ENCODE measurements at regions of chr6 and their contacts with region 1.

Region 1: GRCh38 chr6:80106418-80107235 is at the start of gene BCKDHB:
- DNase-seq: peak; percentile 99
- H3K4me3 ChIP-seq: peak within 1 kb of the TSS; percentile 71 to 89 (median 84)
- H3K27ac ChIP-seq: peak within 1 kb of the TSS; percentile 89 to 97 (median 94)
- H3K4me1 ChIP-seq: peaks cover 6 to 17% (median 13%) of the 10 kb centered on the region in 4 donors
- H3K27me3 ChIP-seq: no peaks in the 10 kb centered on the region
- CTCF ChIP-seq: peak in 1 of 3 experiments; percentile 20
- EP300 ChIP-seq: no peak
- POLR2A ChIP-seq: peak; percentile 61
- total RNA-seq, gene BCKDHB: 12.2 to 26.2 (median 20.6) TPM

Region 2: DNA sequence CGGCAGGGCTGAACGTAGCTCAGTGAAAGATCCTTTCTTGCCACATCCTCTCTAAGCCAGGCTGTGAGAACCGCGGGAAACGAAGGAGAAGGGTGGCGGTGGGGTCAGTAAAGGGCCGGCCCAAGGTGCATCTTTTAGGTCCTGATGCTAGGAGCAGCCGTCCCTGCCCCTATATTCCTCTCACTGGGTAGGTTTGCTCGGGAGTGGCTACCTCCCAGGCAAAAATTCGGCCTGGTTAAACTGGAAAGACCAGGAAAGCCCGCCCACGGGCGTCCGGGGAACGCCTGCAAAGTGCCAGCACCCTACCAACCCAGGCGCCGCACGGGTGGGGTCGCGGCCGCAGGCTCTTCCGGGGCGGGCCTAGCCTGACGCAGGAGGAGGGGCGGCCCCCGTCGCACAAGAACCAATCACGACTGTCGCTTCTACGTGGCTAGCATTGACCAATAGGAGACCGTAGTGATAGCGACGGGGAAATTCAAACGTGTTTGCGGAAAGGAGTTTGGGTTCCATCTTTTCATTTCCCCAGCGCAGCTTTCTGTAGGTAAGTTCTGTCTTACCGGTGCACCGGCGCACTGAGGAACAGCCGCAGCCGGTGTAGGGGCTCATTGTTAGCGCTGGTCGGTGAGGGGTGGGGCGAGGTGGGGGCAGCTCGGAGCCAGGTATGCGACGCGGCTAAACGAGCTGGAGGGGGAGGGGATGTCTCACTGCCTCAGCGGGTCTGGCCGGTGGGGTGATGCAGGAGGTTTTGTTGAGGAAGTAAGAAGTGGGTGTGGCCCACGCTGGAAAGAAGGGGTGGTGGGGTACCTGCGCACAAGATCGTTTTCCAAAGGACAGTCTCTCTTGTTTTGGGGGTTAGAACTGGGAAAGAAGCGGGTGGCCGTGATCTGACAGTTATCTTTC is 102.2 kb before region 1 on chr6 and contains the start of gene TTK:
- intact Hi-C with region 1: loop called (anchors 5 kb)
- DNase-seq: peak; percentile 98
- H3K4me3 ChIP-seq: peak within 1 kb of the TSS; percentile 69 to 80 (median 72)
- H3K27ac ChIP-seq: peak within 1 kb of the TSS; percentile 84 to 90 (median 88)
- H3K4me1 ChIP-seq: peaks cover 10 to 16% (median 14%) of the 10 kb centered on the region in 4 donors
- H3K27me3 ChIP-seq: no peaks in the 10 kb centered on the region
- CTCF ChIP-seq: no peak
- EP300 ChIP-seq: no peak
- POLR2A ChIP-seq: no peak
- total RNA-seq, gene TTK: 0.83 to 1.6 TPM in 2 of 4 donors, not detected in the others

Measured in esophagus muscularis mucosa (tissue), 4 donors.